Endothelial cell of umbilical vein (primary cell): ENCODE measurements at regions of chr15 and their contacts with region 1.

Region 1: GRCh38 chr15:48861813-48862431 is 16.0 kb upstream of the EID1 start:
- DNase-seq: peak; percentile 58
- H3K4me3 ChIP-seq: no peak overlapping the region
- H3K27ac ChIP-seq: no peak overlapping the region
- H3K4me1 ChIP-seq: no peaks in the 10 kb centered on the region
- H3K27me3 ChIP-seq: no peaks in the 10 kb centered on the region
- CTCF ChIP-seq: peak; percentile 51 to 57
- POLR2A ChIP-seq: no peak

Region 2: GRCh38 chr15:48877630-48878595 is 16.0 kb after region 1 on chr15 and contains the start of gene EID1:
- CTCF ChIA-PET with region 1: interaction called, 17 read pairs
- POLR2A ChIA-PET with region 1: no interaction called
- dilution Hi-C with region 1: no loop called
- intact Hi-C with region 1: no loop called
- DNase-seq: peak; percentile 97
- H3K4me3 ChIP-seq: peak within 1 kb of the TSS; percentile 25 to 86 (median 67)
- H3K27ac ChIP-seq: peak within 1 kb of the TSS; percentile 29
- H3K4me1 ChIP-seq: peaks cover 13% of the 10 kb centered on the region
- H3K27me3 ChIP-seq: peaks cover under 1 to 7% of the 10 kb centered on the region in 2 experiments
- CTCF ChIP-seq: no peak
- POLR2A ChIP-seq: peak; percentile 86
- total RNA-seq, gene EID1: 146 and 153 TPM in 2 replicates

Region 3: DNA sequence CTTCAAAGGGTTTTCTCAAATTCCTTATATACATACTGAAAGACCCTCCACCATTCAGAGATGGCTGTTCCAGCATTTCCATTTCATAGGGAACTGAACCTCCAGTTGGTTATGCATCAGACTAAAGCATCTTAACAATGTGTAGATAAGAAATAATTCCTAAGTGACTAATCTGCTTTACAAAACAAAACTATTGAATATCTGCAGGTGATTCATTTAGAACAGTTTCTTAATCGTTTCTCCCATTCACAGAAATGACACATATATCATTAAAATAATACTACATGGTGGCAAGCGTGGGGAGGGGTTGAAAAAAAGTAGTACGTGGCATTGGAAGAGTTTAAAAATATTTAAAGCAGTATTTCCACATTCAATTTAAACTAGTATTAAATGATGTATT is 274.0 kb after region 1 on chr15:
- CTCF ChIA-PET with region 1: interaction called, 17 read pairs
- POLR2A ChIA-PET with region 1: no interaction called
- dilution Hi-C with region 1: no loop called
- intact Hi-C with region 1: no loop called
- DNase-seq: peak; percentile 81
- H3K4me3 ChIP-seq: peak overlapping the region in 1 of 3 experiments; percentile 17
- H3K27ac ChIP-seq: peak overlapping the region; percentile 97
- H3K4me1 ChIP-seq: peaks cover 50% of the 10 kb centered on the region
- H3K27me3 ChIP-seq: no peaks in the 10 kb centered on the region
- CTCF ChIP-seq: no peak
- POLR2A ChIP-seq: no peak

Region 4: GRCh38 chr15:49225613-49226281 is 363.8 kb after region 1 on chr15:
- CTCF ChIA-PET with region 1: interaction called, 29 read pairs
- POLR2A ChIA-PET with region 1: no interaction called
- dilution Hi-C with region 1: no loop called
- intact Hi-C with region 1: loop called (anchors 1 kb)
- DNase-seq: peak; percentile 28
- H3K4me3 ChIP-seq: no peak overlapping the region
- H3K27ac ChIP-seq: no peak overlapping the region
- H3K4me1 ChIP-seq: no peaks in the 10 kb centered on the region
- H3K27me3 ChIP-seq: no peaks in the 10 kb centered on the region
- CTCF ChIP-seq: peak; percentile 19 to 46
- POLR2A ChIP-seq: no peak

Region 5: GRCh38 chr15:49620658-49621368 is 758.9 kb after region 1 on chr15 and contains the starts of genes DTWD1 and FAM227B:
- CTCF ChIA-PET with region 1: no interaction called
- POLR2A ChIA-PET with region 1: no interaction called
- dilution Hi-C with region 1: no loop called
- intact Hi-C with region 1: loop called (anchors 5 kb)
- DNase-seq: peak; percentile 98
- H3K4me3 ChIP-seq: peak within 1 kb of the TSS; percentile 79 to 95 (median 91)
- H3K27ac ChIP-seq: peak within 1 kb of the TSS; percentile 64
- H3K4me1 ChIP-seq: peaks cover 11% of the 10 kb centered on the region
- H3K27me3 ChIP-seq: no peaks in the 10 kb centered on the region
- CTCF ChIP-seq: no peak
- POLR2A ChIP-seq: peak; percentile 88
- total RNA-seq, gene DTWD1: 18.7 and 20.1 TPM in 2 replicates
- total RNA-seq, gene FAM227B: 1.5 and 1.8 TPM in 2 replicates